Activated T-helper 1 cell treated with anti-CD3 and anti-CD28 coated beads, Interleukin-12 subunit alpha, Interleukin-12 subunit beta, Interleukin-2, Interleukin-4 antibody, amounts not matched to agents 30 ng/mL and 10 ng/mL and 1 ng/mL, durations not matched to agents 14 hours and 24 hours and 36 hours (primary cell): ENCODE measurements at regions of chr16 and their contacts with region 1.

Region 1: GRCh38 chr16:35631261-35631945 is 2172.0 kb downstream of the TP53TG3F start:
- DNase-seq: no peak
- H3K4me3 Mint-ChIP-seq: no peak overlapping the region
- H3K27ac Mint-ChIP-seq: no peak overlapping the region
- H3K4me1 Mint-ChIP-seq: no peaks in the 10 kb centered on the region
- H3K27me3 Mint-ChIP-seq: no peaks in the 10 kb centered on the region

Region 2: GRCh38 chr16:35352431-35352830 is 279.0 kb before region 1 on chr16:
- intact Hi-C with region 1: no loop called
- DNase-seq: no peak
- H3K4me3 Mint-ChIP-seq: no peak overlapping the region
- H3K27ac Mint-ChIP-seq: no peak overlapping the region
- H3K4me1 Mint-ChIP-seq: no peaks in the 10 kb centered on the region
- H3K27me3 Mint-ChIP-seq: no peaks in the 10 kb centered on the region

Region 3: GRCh38 chr16:35463358-35463757 is 168.0 kb before region 1 on chr16:
- intact Hi-C with region 1: no loop called
- DNase-seq: no peak
- H3K4me3 Mint-ChIP-seq: no peak overlapping the region
- H3K27ac Mint-ChIP-seq: no peak overlapping the region
- H3K4me1 Mint-ChIP-seq: no peaks in the 10 kb centered on the region
- H3K27me3 Mint-ChIP-seq: no peaks in the 10 kb centered on the region

Region 4: GRCh38 chr16:35690413-35690812 is 59.0 kb after region 1 on chr16:
- intact Hi-C with region 1: loop called (anchors 10 kb)
- DNase-seq: no peak
- H3K4me3 Mint-ChIP-seq: no peak overlapping the region
- H3K27ac Mint-ChIP-seq: no peak overlapping the region
- H3K4me1 Mint-ChIP-seq: no peaks in the 10 kb centered on the region
- H3K27me3 Mint-ChIP-seq: no peaks in the 10 kb centered on the region

Region 5: GRCh38 chr16:35706901-35707300 is 75.5 kb after region 1 on chr16:
- intact Hi-C with region 1: no loop called
- DNase-seq: no peak
- H3K4me3 Mint-ChIP-seq: no peak overlapping the region
- H3K27ac Mint-ChIP-seq: no peak overlapping the region
- H3K4me1 Mint-ChIP-seq: no peaks in the 10 kb centered on the region
- H3K27me3 Mint-ChIP-seq: no peaks in the 10 kb centered on the region